Transverse colon (tissue), 4 donors: ENCODE measurements at regions of chr19 and their contacts with region 1.

Region 1: DNA sequence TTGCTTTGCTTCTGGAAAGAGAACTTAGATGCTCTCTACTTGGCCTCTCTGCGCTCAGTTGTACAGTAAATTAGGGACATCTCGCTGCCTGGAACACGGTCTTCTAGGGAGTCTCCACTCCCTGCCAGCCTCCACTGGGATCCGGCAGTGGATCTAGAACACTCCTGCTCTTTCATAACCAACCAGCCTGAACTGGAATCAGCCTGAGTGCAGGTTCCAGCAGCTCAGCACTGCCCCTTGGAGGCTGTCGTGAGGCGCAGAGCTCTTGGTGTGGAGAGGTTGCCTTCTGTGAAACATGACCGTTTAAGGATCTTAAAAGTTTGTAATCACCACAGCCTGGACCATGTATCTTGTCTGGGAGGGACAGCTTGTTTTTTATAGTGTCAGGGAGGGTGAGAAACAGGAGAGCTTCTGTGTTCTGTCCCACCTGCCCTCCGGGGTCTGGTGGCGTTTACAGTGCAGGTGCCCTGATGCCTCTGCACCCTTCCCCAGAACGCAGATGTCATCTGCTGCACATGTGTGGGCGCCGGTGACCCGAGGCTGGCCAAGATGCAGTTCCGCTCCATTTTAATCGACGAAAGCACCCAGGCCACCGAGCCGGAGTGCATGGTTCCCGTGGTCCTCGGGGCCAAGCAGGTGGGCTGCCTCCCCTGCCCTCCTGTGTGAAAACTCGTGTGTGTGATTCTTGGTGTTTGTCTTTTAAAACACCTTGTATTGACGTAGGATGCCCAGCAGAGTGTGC is 24.8 kb downstream of the UPF1 start:
- DNase-seq: no peak
- H3K4me3 ChIP-seq: no peak overlapping the region
- H3K27ac ChIP-seq: no peak overlapping the region
- H3K4me1 ChIP-seq: no peaks in the 10 kb centered on the region
- H3K27me3 ChIP-seq: no peaks in the 10 kb centered on the region
- CTCF ChIP-seq: no peak
- EP300 ChIP-seq: no peak
- POLR2A ChIP-seq: no peak

Region 2: GRCh38 chr19:18440415-18440877 is 416.1 kb before region 1 on chr19:
- in situ Hi-C with region 1: loop called in 1 of 4 experiments (anchors 10 kb)
- intact Hi-C with region 1: loop called (anchors 10 kb)
- DNase-seq: no peak
- H3K4me3 ChIP-seq: no peak overlapping the region
- H3K27ac ChIP-seq: no peak overlapping the region
- H3K4me1 ChIP-seq: peaks cover 15 to 31% (median 26%) of the 10 kb centered on the region in 4 donors
- H3K27me3 ChIP-seq: peaks cover 13% of the 10 kb centered on the region
- CTCF ChIP-seq: peak in 2 of 5 experiments; percentile 21 to 23
- EP300 ChIP-seq: no peak
- POLR2A ChIP-seq: no peak